CD14-positive monocyte (primary cell): ENCODE measurements at regions of chr11 and their contacts with region 1.

Region 1: GRCh38 chr11:61980783-61981541 is 13.5 kb upstream of the FTH1 start:
- DNase-seq: no peak
- H3K4me3 ChIP-seq: no peak overlapping the region
- H3K4me3 Mint-ChIP-seq: no peak overlapping the region
- H3K27ac ChIP-seq: no peak overlapping the region
- H3K27ac Mint-ChIP-seq: peak overlapping the region in 6 of 7 donors; percentile 2 to 79 (median 43)
- H3K4me1 ChIP-seq: peaks cover 25 to 35% of the 10 kb centered on the region in 2 donors
- H3K4me1 Mint-ChIP-seq: peaks cover 42% of the 10 kb centered on the region
- H3K27me3 ChIP-seq: no peaks in the 10 kb centered on the region
- H3K27me3 Mint-ChIP-seq: peaks cover 1 to 8% (median 3%) of the 10 kb centered on the region in 3 donors
- CTCF ChIP-seq: no peak

Region 2: GRCh38 chr11:62018981-62019664 is 38.2 kb after region 1 on chr11:
- intact Hi-C with region 1: loop called in 1 of 2 experiments (anchors 5 kb)
- DNase-seq: peak; percentile 56 to 63 (median 61)
- H3K4me3 ChIP-seq: no peak overlapping the region
- H3K4me3 Mint-ChIP-seq: peak overlapping the region in 1 of 2 donors; percentile 44
- H3K27ac ChIP-seq: peak overlapping the region; percentile 48 to 72
- H3K27ac Mint-ChIP-seq: peak overlapping the region; percentile 87 to 95 (median 92)
- H3K4me1 ChIP-seq: peaks cover 28 to 37% of the 10 kb centered on the region in 2 donors
- H3K4me1 Mint-ChIP-seq: peaks cover 41% of the 10 kb centered on the region
- H3K27me3 ChIP-seq: no peaks in the 10 kb centered on the region
- H3K27me3 Mint-ChIP-seq: peaks cover 0 to 9% (median 0%) of the 10 kb centered on the region in 3 donors
- CTCF ChIP-seq: no peak

Region 3: GRCh38 chr11:62324738-62325556 is 344.0 kb after region 1 on chr11:
- intact Hi-C with region 1: no loop called
- DNase-seq: peak; percentile 74 to 86 (median 84)
- H3K4me3 ChIP-seq: no peak overlapping the region
- H3K4me3 Mint-ChIP-seq: peak overlapping the region in 1 of 2 donors; percentile 47
- H3K27ac ChIP-seq: no peak overlapping the region
- H3K27ac Mint-ChIP-seq: no peak overlapping the region
- H3K4me1 ChIP-seq: peaks cover 22 to 30% of the 10 kb centered on the region in 2 donors
- H3K4me1 Mint-ChIP-seq: peaks cover 28% of the 10 kb centered on the region
- H3K27me3 ChIP-seq: no peaks in the 10 kb centered on the region
- H3K27me3 Mint-ChIP-seq: peaks cover 0 to 5% (median 0%) of the 10 kb centered on the region in 3 donors
- CTCF ChIP-seq: peak; percentile 99